B cell (primary cell): ENCODE measurements at regions of chr7 and their contacts with region 1.

Region 1: DNA sequence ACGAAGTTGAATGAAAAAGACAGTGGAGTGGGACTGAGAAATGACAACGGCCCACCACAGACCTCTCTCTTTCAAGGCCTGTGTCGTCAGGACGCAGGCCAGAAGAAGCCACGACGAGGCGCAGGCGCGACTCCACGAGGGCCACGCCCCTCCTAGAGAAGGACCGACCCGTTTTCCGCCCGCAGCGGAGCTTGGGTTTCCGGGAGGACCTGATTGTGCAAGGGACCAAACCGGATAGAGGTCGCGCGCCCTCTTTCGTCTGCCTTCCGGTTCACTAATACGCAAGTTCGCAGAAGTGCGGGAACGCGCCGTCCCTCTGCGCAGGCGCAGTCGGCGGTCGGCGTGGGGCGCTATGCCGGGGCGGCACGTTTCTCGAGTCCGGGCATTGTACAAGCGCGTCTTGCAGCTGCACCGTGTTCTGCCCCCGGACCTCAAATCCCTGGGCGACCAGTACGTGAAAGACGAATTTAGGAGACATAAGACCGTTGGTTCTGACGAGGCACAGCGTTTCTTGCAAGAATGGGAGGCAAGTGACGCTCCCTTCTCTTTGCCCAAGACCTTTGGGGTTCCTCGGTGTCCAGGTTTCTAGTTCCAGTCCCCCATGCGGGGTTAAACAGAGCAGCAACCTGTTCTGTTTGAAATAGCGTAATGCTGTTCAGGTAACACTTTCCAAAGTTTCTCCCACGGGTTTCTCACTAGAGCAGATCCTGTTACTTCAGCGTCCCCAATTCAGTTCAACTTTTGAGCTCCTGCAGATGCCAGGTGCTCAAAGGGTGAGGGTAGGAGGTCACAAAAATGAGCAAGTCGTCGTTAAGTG is at the start of gene SDHAF3:
- DNase-seq: peak; percentile 98
- ATAC-seq: peak; percentile 85
- H3K4me3 ChIP-seq: peak within 1 kb of the TSS; percentile 71 to 99 (median 88)
- H3K4me3 Mint-ChIP-seq: peak within 1 kb of the TSS; percentile 92
- H3K27ac ChIP-seq: peak within 1 kb of the TSS; percentile 85 to 90
- H3K27ac Mint-ChIP-seq: peak within 1 kb of the TSS; percentile 96
- H3K4me1 ChIP-seq: peaks cover 24 to 25% of the 10 kb centered on the region in 2 donors
- H3K4me1 Mint-ChIP-seq: peaks cover 51% of the 10 kb centered on the region
- H3K27me3 ChIP-seq: no peaks in the 10 kb centered on the region
- H3K27me3 Mint-ChIP-seq: no peaks in the 10 kb centered on the region
- CTCF ChIP-seq: peak; percentile 23
- total RNA-seq, gene SDHAF3: 18.5 and 20.2 TPM in 2 replicates

Region 2: DNA sequence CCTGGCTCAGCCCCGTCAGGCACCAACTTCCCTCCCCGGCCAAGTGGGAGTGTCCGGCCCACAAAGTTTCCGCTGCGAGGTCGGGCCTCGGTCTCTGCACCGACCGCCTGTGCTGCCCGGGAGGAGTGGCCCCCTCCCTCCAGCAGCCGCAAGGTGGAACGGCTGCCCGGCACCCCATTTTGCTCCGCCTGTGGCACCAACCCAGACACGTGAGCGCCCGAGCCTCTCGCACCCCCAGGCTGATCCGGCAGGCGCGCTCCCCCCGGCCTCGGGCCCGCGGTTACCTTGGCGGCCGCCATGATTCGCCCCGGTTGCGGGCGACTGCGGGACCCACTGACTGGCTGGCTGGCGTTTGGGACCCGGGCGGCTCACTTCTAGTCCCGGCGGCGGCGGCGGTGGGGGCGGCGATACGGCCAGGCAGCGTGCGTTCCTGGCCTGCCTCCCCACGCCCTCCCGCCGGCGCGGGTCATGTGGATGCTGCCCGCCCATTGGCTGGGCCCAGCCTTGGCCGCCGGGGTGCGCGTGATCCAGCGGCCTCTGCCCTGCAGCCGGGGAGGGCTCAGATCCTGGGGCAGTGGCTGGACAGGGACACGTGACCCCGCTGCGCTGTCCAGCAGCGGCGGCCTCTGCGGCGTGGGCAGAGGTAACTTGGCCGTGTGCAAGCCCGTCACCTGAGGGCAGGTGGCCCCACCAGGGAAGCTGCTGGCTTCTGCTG is 795.8 kb before region 1 on chr7 and contains the start of gene SLC25A13:
- CTCF ChIA-PET with region 1: no interaction called
- POLR2A ChIA-PET with region 1: no interaction called
- intact Hi-C with region 1: loop called (anchors 1 kb)
- DNase-seq: peak; percentile 80
- ATAC-seq: peak; percentile 72
- H3K4me3 ChIP-seq: peak within 1 kb of the TSS; percentile 67 to 92 (median 79)
- H3K4me3 Mint-ChIP-seq: peak within 1 kb of the TSS; percentile 86
- H3K27ac ChIP-seq: peak within 1 kb of the TSS; percentile 85 to 87
- H3K27ac Mint-ChIP-seq: peak within 1 kb of the TSS; percentile 88
- H3K4me1 ChIP-seq: peaks cover 17 to 20% of the 10 kb centered on the region in 2 donors
- H3K4me1 Mint-ChIP-seq: peaks cover 42% of the 10 kb centered on the region
- H3K27me3 ChIP-seq: no peaks in the 10 kb centered on the region
- H3K27me3 Mint-ChIP-seq: no peaks in the 10 kb centered on the region
- CTCF ChIP-seq: no peak
- total RNA-seq, gene SLC25A13: 30.9 and 39.6 TPM in 2 replicates

Region 3: GRCh38 chr7:96949766-96950165 is 167.8 kb before region 1 on chr7:
- CTCF ChIA-PET with region 1: no interaction called
- POLR2A ChIA-PET with region 1: no interaction called
- intact Hi-C with region 1: no loop called
- DNase-seq: no peak
- ATAC-seq: no peak
- H3K4me3 ChIP-seq: no peak overlapping the region
- H3K4me3 Mint-ChIP-seq: no peak overlapping the region
- H3K27ac ChIP-seq: no peak overlapping the region
- H3K27ac Mint-ChIP-seq: no peak overlapping the region
- H3K4me1 ChIP-seq: no peaks in the 10 kb centered on the region
- H3K4me1 Mint-ChIP-seq: no peaks in the 10 kb centered on the region
- H3K27me3 ChIP-seq: no peaks in the 10 kb centered on the region
- H3K27me3 Mint-ChIP-seq: peaks cover 14% of the 10 kb centered on the region
- CTCF ChIP-seq: no peak

Region 4: GRCh38 chr7:96973986-96974385 is 143.6 kb before region 1 on chr7:
- CTCF ChIA-PET with region 1: no interaction called
- POLR2A ChIA-PET with region 1: no interaction called
- intact Hi-C with region 1: no loop called
- DNase-seq: no peak
- ATAC-seq: no peak
- H3K4me3 ChIP-seq: no peak overlapping the region
- H3K4me3 Mint-ChIP-seq: no peak overlapping the region
- H3K27ac ChIP-seq: no peak overlapping the region
- H3K27ac Mint-ChIP-seq: no peak overlapping the region
- H3K4me1 ChIP-seq: no peaks in the 10 kb centered on the region
- H3K4me1 Mint-ChIP-seq: no peaks in the 10 kb centered on the region
- H3K27me3 ChIP-seq: peaks cover 0 to 6% (median 1%) of the 10 kb centered on the region in 4 experiments
- H3K27me3 Mint-ChIP-seq: peaks cover 11% of the 10 kb centered on the region
- CTCF ChIP-seq: no peak

Region 5: DNA sequence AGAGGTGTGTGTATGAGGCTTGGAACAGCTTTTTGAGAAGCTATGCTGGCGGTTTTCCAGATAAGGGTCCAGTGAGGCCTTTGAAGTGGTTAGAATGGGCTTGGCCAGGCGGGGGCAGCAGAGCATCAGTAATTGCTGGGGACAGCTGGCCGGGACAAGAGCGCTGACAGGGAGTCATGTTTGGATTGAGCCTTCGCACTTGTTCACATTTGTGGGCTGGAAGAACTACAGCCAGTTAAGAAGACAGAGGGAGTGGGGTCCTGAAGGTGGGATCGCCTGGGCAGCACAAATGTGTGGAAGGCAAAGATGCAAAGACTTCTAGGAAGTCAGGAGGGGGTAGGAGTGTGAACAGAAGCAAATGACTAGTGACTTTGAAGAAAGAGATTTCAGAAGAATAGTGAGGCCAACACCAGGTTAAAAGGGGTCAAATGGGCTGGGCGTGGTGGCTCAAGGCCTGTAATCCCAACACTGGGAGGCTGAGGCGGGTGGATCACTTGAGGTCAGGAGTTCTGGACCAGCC is 12.8 kb before region 1 on chr7:
- CTCF ChIA-PET with region 1: interaction called, 36 read pairs
- POLR2A ChIA-PET with region 1: no interaction called
- intact Hi-C with region 1: no loop called
- DNase-seq: peak; percentile 82
- ATAC-seq: peak; percentile 92
- H3K4me3 ChIP-seq: no peak overlapping the region
- H3K4me3 Mint-ChIP-seq: no peak overlapping the region
- H3K27ac ChIP-seq: no peak overlapping the region
- H3K27ac Mint-ChIP-seq: no peak overlapping the region
- H3K4me1 ChIP-seq: peaks cover 3% of the 10 kb centered on the region in 2 donors
- H3K4me1 Mint-ChIP-seq: no peaks in the 10 kb centered on the region
- H3K27me3 ChIP-seq: peaks cover 0 to 7% (median 3%) of the 10 kb centered on the region in 4 experiments
- H3K27me3 Mint-ChIP-seq: peaks cover 27% of the 10 kb centered on the region
- CTCF ChIP-seq: peak; percentile 92

Region 6: GRCh38 chr7:97179454-97180104 is 62.0 kb after region 1 on chr7:
- CTCF ChIA-PET with region 1: interaction called, 10 read pairs
- POLR2A ChIA-PET with region 1: no interaction called
- intact Hi-C with region 1: no loop called
- DNase-seq: peak; percentile 66
- ATAC-seq: peak; percentile 51
- H3K4me3 ChIP-seq: no peak overlapping the region
- H3K4me3 Mint-ChIP-seq: no peak overlapping the region
- H3K27ac ChIP-seq: no peak overlapping the region
- H3K27ac Mint-ChIP-seq: no peak overlapping the region
- H3K4me1 ChIP-seq: no peaks in the 10 kb centered on the region
- H3K4me1 Mint-ChIP-seq: peaks cover 4% of the 10 kb centered on the region
- H3K27me3 ChIP-seq: no peaks in the 10 kb centered on the region
- H3K27me3 Mint-ChIP-seq: no peaks in the 10 kb centered on the region
- CTCF ChIP-seq: peak; percentile 86

Region 7: GRCh38 chr7:97872025-97872669 is 754.6 kb after region 1 on chr7 and contains the start of gene ASNS:
- CTCF ChIA-PET with region 1: no interaction called
- POLR2A ChIA-PET with region 1: interaction called, 8 read pairs
- intact Hi-C with region 1: loop called (anchors 1 kb)
- DNase-seq: peak; percentile 92
- ATAC-seq: peak; percentile 95
- H3K4me3 ChIP-seq: peak within 1 kb of the TSS; percentile 47 to 75 (median 70)
- H3K4me3 Mint-ChIP-seq: peak within 1 kb of the TSS; percentile 91
- H3K27ac ChIP-seq: peak within 1 kb of the TSS; percentile 68 to 85
- H3K27ac Mint-ChIP-seq: peak within 1 kb of the TSS; percentile 87
- H3K4me1 ChIP-seq: peaks cover 6 to 12% of the 10 kb centered on the region in 2 donors
- H3K4me1 Mint-ChIP-seq: peaks cover 14% of the 10 kb centered on the region
- H3K27me3 ChIP-seq: no peaks in the 10 kb centered on the region
- H3K27me3 Mint-ChIP-seq: no peaks in the 10 kb centered on the region
- CTCF ChIP-seq: no peak
- total RNA-seq, gene ASNS: 24.2 and 39.6 TPM in 2 replicates

Region 8: DNA sequence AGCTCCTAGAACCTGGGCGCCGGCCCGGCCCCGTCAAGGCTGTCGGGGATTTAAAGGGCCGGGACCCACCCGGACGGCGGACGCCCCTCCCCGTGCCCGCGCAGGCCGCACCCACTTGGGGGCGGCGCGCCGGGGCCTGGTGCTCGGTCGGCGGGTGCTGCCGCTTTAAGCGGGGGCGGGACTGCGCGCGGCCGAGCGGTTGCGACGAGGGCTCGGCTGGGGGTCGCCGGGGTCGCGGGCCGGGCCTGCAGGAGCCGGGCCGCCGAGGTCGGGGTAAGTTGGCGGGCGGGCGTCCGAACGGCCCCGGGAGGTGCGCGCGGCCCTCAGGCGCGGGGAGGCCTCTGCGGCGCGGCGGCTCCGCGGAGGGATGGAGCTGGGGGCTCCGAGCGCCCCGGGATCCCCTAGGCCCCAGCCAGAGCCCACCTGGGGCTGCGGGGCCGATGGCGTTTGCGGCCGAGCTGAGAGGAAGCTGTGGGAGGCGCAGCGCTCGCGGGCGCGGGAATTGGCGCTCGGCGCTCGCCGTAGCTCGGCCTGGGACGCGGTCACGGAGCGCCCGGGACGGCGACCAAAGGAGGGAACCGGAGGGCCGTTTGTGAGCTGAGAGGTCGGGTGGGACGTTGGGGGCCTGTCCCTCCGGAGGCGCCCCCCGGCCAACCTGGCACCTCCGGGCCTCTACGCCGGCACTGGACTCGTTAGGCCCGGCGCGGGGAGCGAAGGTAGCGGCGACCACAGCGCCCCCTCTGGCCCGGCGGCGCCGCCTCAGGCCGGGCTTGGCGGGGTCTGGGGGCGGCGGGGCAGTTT is 1761.0 kb after region 1 on chr7 and contains the start of gene TRRAP:
- CTCF ChIA-PET with region 1: no interaction called
- POLR2A ChIA-PET with region 1: no interaction called
- intact Hi-C with region 1: loop called (anchors 5 kb)
- DNase-seq: peak; percentile 91
- ATAC-seq: peak; percentile 75
- H3K4me3 ChIP-seq: peak within 1 kb of the TSS; percentile 12 to 100 (median 98)
- H3K4me3 Mint-ChIP-seq: peak within 1 kb of the TSS; percentile 92
- H3K27ac ChIP-seq: peak within 1 kb of the TSS; percentile 75 to 89
- H3K27ac Mint-ChIP-seq: peak within 1 kb of the TSS; percentile 90
- H3K4me1 ChIP-seq: peaks cover 11 to 16% of the 10 kb centered on the region in 2 donors
- H3K4me1 Mint-ChIP-seq: peaks cover 11% of the 10 kb centered on the region
- H3K27me3 ChIP-seq: peaks cover 0 to 6% (median 0%) of the 10 kb centered on the region in 4 experiments
- H3K27me3 Mint-ChIP-seq: no peaks in the 10 kb centered on the region
- CTCF ChIP-seq: peak; percentile 94
- total RNA-seq, gene TRRAP: 102 and 107 TPM in 2 replicates